ENCODE measurements at regions of chr3 and their contacts with region 1.

Region 1: GRCh38 chr3:127697551-127698240 is 24.9 kb downstream of the ABTB1 start:
- DNase-seq: peak; percentile 83 to 90
- ATAC-seq: peak; percentile 70 to 78 (median 75)
- H3K4me3 ChIP-seq: peak overlapping the region in 3 of 10 donors; percentile 23 to 29 (median 25)
- H3K27ac ChIP-seq: peak overlapping the region; percentile 89 to 99 (median 95)
- H3K4me1 ChIP-seq: peaks cover 55 to 86% (median 65%) of the 10 kb centered on the region in 9 donors
- H3K27me3 ChIP-seq: no peaks in the 10 kb centered on the region
- CTCF ChIP-seq: no peak

Region 2: GRCh38 chr3:127679285-127680145 is 18.2 kb before region 1 on chr3:
- intact Hi-C with region 1: loop called in 1 of 10 experiments (anchors 1 kb)
- DNase-seq: no peak
- ATAC-seq: no peak
- H3K4me3 ChIP-seq: no peak overlapping the region
- H3K27ac ChIP-seq: peak overlapping the region in 1 of 10 donors; percentile 72
- H3K4me1 ChIP-seq: peaks cover 0 to 50% (median 10%) of the 10 kb centered on the region in 9 donors
- H3K27me3 ChIP-seq: no peaks in the 10 kb centered on the region
- CTCF ChIP-seq: peak in 2 of 9 donors; percentile 7 to 19

Region 3: DNA sequence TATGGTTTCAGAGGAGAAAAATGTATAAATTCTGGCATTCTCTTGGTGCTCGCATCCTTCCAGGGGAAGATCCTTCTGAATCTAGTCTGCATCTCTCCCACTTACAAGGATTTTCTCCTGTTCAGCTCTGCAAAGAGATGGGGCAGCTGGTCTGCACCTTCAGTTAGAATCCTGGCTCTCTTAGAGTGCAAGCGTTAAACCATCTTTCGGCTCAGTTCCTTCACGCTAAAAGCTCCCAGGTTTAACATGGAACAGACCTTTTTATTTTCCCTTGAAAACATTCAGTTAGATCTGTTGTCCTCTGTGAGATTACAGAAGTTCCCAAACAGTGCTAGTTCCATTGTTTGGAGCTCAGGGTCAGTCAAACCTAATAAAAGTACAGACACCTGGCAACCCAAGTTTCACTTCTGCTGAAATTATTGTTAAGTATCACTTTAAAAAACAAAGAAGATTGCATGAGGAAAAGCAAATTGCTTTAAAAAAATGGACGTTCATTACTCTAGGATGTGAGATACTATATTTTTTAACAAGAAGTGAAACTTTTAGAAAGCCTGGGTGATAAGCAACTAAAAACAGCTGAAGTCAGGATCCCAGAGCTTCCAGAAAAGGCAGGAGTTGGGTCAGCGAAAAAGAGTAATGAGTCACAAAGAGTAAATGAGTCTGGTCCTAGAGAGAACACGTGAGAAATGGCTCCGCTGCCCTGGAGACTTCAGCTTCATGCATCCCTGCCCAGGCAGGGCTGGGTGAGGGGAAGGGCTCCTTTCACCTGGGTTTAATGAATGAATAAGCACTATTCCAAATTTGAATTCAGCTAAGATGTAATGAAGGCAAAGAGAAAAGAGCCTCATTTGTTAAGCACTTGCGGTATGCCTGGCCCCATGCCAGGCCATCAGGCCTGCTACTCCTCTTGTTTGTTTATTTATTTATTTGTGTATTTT is 38.3 kb after region 1 on chr3:
- intact Hi-C with region 1: loop called in 2 of 10 experiments (anchors 2 to 5 kb)
- DNase-seq: no peak
- ATAC-seq: peak in 3 of 8 donors; percentile 11 to 43 (median 39)
- H3K4me3 ChIP-seq: peak overlapping the region in 2 of 10 donors; percentile 0 to 1
- H3K27ac ChIP-seq: peak overlapping the region; percentile 62 to 94 (median 82)
- H3K4me1 ChIP-seq: peaks cover 38 to 100% (median 94%) of the 10 kb centered on the region in 9 donors
- H3K27me3 ChIP-seq: no peaks in the 10 kb centered on the region
- CTCF ChIP-seq: no peak

Region 4: DNA sequence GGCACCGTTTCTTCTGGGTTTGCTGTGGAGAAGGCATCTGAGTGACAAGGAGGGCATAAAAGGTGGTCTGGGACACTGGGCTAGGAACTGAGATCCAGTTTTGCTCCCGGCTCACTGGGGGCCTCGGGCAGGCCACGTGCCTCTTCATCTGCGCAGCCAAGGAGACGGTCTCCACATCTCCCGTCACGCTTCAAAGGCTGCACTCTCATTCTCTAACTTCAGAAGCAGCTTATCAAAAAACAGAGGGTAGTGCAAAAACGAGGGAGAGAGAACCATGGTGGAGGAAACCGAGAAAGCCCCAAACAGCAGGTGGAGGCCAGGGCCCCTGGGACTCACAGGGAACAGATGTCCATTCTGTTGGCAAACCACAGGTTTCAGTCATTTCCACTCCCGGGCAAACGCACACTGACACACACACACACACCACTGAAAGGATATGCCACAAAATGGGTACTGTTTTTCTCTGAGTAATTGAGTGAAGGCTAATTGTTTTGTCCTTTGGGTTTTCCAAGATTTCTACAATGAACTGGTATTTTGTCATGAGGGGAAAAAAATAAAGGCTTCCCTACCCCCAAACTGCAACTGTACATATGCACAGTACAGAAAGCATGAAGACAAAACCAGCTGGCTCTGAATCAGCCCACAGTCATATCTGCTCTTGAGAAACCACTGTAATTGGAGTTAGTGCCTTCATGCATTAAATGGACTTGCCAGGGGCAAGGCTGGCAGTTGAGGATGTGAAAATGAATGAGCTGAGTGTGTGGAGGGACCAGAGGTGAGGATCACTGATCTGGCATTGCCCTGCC is 52.7 kb after region 1 on chr3:
- intact Hi-C with region 1: loop called in 7 of 10 experiments (anchors 1 to 5 kb)
- DNase-seq: no peak
- ATAC-seq: no peak
- H3K4me3 ChIP-seq: no peak overlapping the region
- H3K27ac ChIP-seq: peak overlapping the region; percentile 31 to 94 (median 84)
- H3K4me1 ChIP-seq: peaks cover 21 to 95% (median 66%) of the 10 kb centered on the region in 9 donors
- H3K27me3 ChIP-seq: no peaks in the 10 kb centered on the region
- CTCF ChIP-seq: no peak

Region 5: GRCh38 chr3:127817396-127817841 is 119.7 kb after region 1 on chr3:
- intact Hi-C with region 1: loop called in 8 of 10 experiments (anchors 2 to 10 kb)
- DNase-seq: no peak
- ATAC-seq: peak; percentile 3 to 74 (median 48)
- H3K4me3 ChIP-seq: peak overlapping the region in 4 of 10 donors; percentile 0 to 66 (median 7)
- H3K27ac ChIP-seq: peak overlapping the region; percentile 18 to 98 (median 80)
- H3K4me1 ChIP-seq: peaks cover 29 to 91% (median 68%) of the 10 kb centered on the region in 9 donors
- H3K27me3 ChIP-seq: no peaks in the 10 kb centered on the region
- CTCF ChIP-seq: no peak

Region 6: GRCh38 chr3:127959846-127960245 is 262.1 kb after region 1 on chr3:
- intact Hi-C with region 1: loop called in 1 of 10 experiments (anchors 10 kb)
- DNase-seq: peak in 1 of 2 donors; percentile 52
- ATAC-seq: peak; percentile 54 to 74 (median 62)
- H3K4me3 ChIP-seq: no peak overlapping the region
- H3K27ac ChIP-seq: peak overlapping the region in 9 of 10 donors; percentile 23 to 94 (median 69)
- H3K4me1 ChIP-seq: peaks cover 0 to 63% (median 10%) of the 10 kb centered on the region in 9 donors
- H3K27me3 ChIP-seq: no peaks in the 10 kb centered on the region
- CTCF ChIP-seq: peak in 7 of 9 donors; percentile 30 to 66 (median 53)

Region 7: GRCh38 chr3:127970966-127971592 is 273.4 kb after region 1 on chr3:
- intact Hi-C with region 1: loop called in 3 of 10 experiments (anchors 5 to 10 kb)
- DNase-seq: peak in 1 of 2 donors; percentile 28
- ATAC-seq: peak; percentile 69 to 87 (median 79)
- H3K4me3 ChIP-seq: no peak overlapping the region
- H3K27ac ChIP-seq: no peak overlapping the region
- H3K4me1 ChIP-seq: peaks cover 0 to 9% (median 0%) of the 10 kb centered on the region in 9 donors
- H3K27me3 ChIP-seq: no peaks in the 10 kb centered on the region
- CTCF ChIP-seq: peak; percentile 59 to 82 (median 70)